CD8-positive, alpha-beta T cell (primary cell): ENCODE measurements at regions of chr5 and their contacts with region 1.

Region 1: DNA sequence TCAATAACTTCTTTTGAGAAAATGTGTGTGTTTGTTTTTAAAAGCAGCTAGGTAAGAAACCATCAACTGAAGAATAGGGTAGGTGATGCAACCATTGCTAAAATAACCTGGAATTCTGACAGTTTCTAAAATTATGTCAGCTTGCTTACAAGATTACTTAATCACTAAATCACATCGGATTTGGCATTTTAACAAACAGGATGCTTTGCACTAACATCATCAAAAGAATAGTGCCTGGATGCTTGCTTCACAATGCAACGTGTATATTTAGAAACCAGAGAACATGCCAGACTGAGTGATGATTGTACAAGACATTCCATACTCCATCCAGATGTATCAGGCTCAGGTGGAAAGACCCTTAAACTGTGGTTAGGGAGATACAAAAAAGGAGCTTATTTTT is 43.9 kb downstream of the PAM start:
- DNase-seq: no peak
- ATAC-seq: no peak
- H3K4me3 ChIP-seq: no peak overlapping the region
- H3K4me3 Mint-ChIP-seq: no peak overlapping the region
- H3K27ac ChIP-seq: no peak overlapping the region
- H3K27ac Mint-ChIP-seq: no peak overlapping the region
- H3K4me1 ChIP-seq: peaks cover 19% of the 10 kb centered on the region
- H3K4me1 Mint-ChIP-seq: peaks cover 50% of the 10 kb centered on the region
- H3K27me3 ChIP-seq: no peaks in the 10 kb centered on the region
- H3K27me3 Mint-ChIP-seq: no peaks in the 10 kb centered on the region
- CTCF ChIP-seq: no peak

Region 2: DNA sequence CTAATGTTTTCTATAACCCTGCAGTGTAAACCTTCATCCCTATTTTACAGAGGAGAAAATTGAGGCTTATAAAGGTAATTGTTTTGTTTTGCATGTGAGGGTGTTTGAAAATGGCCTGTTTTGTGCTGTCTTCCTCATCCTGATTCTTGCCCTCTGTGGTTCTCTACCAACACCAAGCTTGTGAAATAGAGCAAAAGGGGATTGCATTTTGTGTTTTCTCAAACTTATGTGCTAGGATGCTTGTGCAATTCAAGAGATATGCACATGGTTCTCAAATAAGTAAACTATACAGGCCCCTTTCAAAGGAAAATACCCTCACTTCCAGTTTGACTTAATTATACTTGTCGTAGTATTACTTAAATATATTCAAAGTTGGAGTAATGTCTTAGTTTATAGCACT is 26.7 kb before region 1 on chr5:
- CTCF ChIA-PET with region 1: no interaction called
- POLR2A ChIA-PET with region 1: no interaction called
- intact Hi-C with region 1: loop called in 1 of 2 experiments (anchors 1 kb)
- DNase-seq: no peak
- ATAC-seq: no peak
- H3K4me3 ChIP-seq: no peak overlapping the region
- H3K4me3 Mint-ChIP-seq: no peak overlapping the region
- H3K27ac ChIP-seq: no peak overlapping the region
- H3K27ac Mint-ChIP-seq: no peak overlapping the region
- H3K4me1 ChIP-seq: peaks cover 7% of the 10 kb centered on the region
- H3K4me1 Mint-ChIP-seq: peaks cover 29% of the 10 kb centered on the region
- H3K27me3 ChIP-seq: no peaks in the 10 kb centered on the region
- H3K27me3 Mint-ChIP-seq: no peaks in the 10 kb centered on the region
- CTCF ChIP-seq: no peak